ENCODE measurements at regions of chr5 and their contacts with region 1.

Region 1: GRCh38 chr5:43631182-43631910 is 28.4 kb downstream of the NNT start:
- DNase-seq: peak; percentile 31
- H3K4me3 Mint-ChIP-seq: no peak overlapping the region
- H3K27ac Mint-ChIP-seq: no peak overlapping the region
- H3K4me1 Mint-ChIP-seq: peaks cover 2% of the 10 kb centered on the region
- H3K27me3 Mint-ChIP-seq: no peaks in the 10 kb centered on the region

Region 2: DNA sequence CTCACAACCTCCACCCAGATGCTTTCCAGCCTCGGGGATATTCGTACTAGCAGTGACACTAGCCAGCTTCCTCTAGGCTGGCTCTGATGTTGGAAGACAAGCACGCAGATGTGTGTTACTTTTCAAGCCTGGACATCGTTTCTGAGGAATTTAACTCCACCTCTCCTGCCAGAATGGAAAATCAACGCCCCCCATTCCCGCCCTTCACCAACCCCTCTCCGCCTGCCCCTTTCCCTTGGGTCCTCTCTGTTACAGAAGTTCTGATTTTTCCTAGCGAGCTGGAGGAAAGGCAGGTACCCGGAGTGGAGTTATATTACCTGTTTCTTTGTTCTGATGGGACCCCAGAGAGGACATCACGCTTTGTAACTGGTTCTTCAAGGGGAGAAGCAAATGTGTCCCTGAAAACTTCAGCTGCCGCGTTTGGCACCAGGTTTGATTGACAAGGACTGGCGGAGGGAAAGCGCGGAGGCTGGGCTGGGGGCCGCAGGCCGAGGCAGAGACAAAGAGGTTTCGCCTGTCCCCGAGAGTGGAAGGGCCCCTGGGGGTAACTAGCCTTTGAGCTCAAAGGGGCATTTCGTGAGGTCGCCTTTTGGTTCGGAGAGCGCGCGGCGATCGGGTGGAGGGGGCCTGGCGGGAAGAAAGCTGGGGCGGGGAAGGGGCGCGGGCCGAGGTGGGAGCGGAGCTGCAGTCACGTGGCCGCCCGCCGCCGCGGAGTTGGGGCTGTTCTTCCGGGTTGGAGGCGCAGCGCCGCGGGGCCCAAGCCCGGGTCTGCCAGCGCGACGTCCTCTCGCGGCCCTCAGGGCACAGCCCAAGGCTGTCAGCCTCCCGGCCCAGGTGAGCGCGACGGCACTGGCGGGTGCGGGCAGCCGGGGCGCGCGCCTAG is 28.6 kb before region 1 on chr5 and contains the start of gene NNT:
- CTCF ChIA-PET with region 1: interaction called, 11 read pairs
- POLR2A ChIA-PET with region 1: interaction called, 16 read pairs
- DNase-seq: peak; percentile 84
- H3K4me3 Mint-ChIP-seq: peak within 1 kb of the TSS; percentile 91
- H3K27ac Mint-ChIP-seq: peak within 1 kb of the TSS; percentile 84
- H3K4me1 Mint-ChIP-seq: peaks cover 41% of the 10 kb centered on the region
- H3K27me3 Mint-ChIP-seq: no peaks in the 10 kb centered on the region
- total RNA-seq, gene NNT: 96.4 to 110 TPM

Region 3: GRCh38 chr5:43609752-43610151 is 21.6 kb before region 1 on chr5:
- CTCF ChIA-PET with region 1: interaction called, 10 read pairs
- POLR2A ChIA-PET with region 1: interaction called, 16 read pairs
- DNase-seq: no peak
- H3K4me3 Mint-ChIP-seq: no peak overlapping the region
- H3K27ac Mint-ChIP-seq: no peak overlapping the region
- H3K4me1 Mint-ChIP-seq: peaks cover 19% of the 10 kb centered on the region
- H3K27me3 Mint-ChIP-seq: no peaks in the 10 kb centered on the region

Region 4: DNA sequence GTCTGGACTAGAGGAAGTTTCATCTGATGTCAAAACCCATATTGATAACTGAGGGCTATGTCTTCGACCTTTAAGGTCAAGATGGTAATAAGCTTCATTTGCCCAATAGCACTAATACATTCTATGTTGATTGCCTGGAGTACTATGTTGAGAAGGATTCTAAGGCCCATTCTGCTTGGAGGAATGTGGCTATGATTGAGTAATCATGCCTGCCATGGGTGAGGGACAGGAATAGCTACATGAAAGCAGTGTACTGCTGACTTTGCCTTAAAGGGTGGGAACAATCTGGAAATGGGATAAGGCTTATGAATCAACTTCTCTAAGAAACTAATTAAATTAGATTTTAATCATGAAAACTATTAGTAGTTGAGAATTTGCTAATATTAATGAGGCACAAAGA is 14.8 kb before region 1 on chr5:
- CTCF ChIA-PET with region 1: interaction called, 40 read pairs
- POLR2A ChIA-PET with region 1: no interaction called
- DNase-seq: no peak
- H3K4me3 Mint-ChIP-seq: no peak overlapping the region
- H3K27ac Mint-ChIP-seq: no peak overlapping the region
- H3K4me1 Mint-ChIP-seq: peaks cover 2% of the 10 kb centered on the region
- H3K27me3 Mint-ChIP-seq: no peaks in the 10 kb centered on the region

Region 5: GRCh38 chr5:43646992-43647391 is 15.6 kb after region 1 on chr5:
- CTCF ChIA-PET with region 1: interaction called, 20 read pairs
- POLR2A ChIA-PET with region 1: interaction called, 3 read pairs
- DNase-seq: no peak
- H3K4me3 Mint-ChIP-seq: no peak overlapping the region
- H3K27ac Mint-ChIP-seq: no peak overlapping the region
- H3K4me1 Mint-ChIP-seq: no peaks in the 10 kb centered on the region
- H3K27me3 Mint-ChIP-seq: no peaks in the 10 kb centered on the region

Region 6: DNA sequence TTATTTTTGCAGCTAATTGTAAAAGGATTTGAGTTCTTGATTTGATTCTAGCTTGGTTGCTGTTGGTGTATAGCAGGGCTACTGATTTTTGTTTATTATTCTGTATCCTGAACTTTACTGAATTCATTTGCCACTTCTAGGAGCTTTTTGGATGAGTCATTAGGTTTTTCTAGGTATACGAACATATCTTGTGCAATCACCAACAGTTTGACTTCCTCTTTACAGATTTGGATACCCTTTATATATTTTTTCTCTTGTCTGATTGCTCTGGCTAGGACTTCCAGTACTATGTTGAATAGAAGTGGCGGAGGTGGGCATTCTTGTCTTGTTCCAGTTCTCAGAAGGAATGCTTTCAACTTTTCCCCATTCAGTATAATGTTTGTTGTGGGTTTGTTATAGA is 547.1 kb after region 1 on chr5:
- CTCF ChIA-PET with region 1: no interaction called
- POLR2A ChIA-PET with region 1: no interaction called
- DNase-seq: no peak
- H3K4me3 Mint-ChIP-seq: no peak overlapping the region
- H3K27ac Mint-ChIP-seq: no peak overlapping the region
- H3K4me1 Mint-ChIP-seq: no peaks in the 10 kb centered on the region
- H3K27me3 Mint-ChIP-seq: no peaks in the 10 kb centered on the region

Measured in activated CD4-positive, alpha-beta memory T cell treated with anti-CD3 and anti-CD28 coated beads, Interleukin-2, amount 10 ng/mL, durations not matched to agents 7 days and 5 days (primary cell).